ENCODE measurements at regions of chr1 and their contacts with region 1.

Region 1: GRCh38 chr1:67760030-67760821 is 73.0 kb downstream of the GNG12 start:
- DNase-seq: peak; percentile 68
- ATAC-seq: peak; percentile 87
- H3K4me3 ChIP-seq: no peak overlapping the region
- H3K27ac ChIP-seq: peak overlapping the region; percentile 86
- H3K4me1 ChIP-seq: peaks cover 24% of the 10 kb centered on the region
- H3K27me3 ChIP-seq: no peaks in the 10 kb centered on the region
- CTCF ChIP-seq: peak; percentile 89

Region 2: DNA sequence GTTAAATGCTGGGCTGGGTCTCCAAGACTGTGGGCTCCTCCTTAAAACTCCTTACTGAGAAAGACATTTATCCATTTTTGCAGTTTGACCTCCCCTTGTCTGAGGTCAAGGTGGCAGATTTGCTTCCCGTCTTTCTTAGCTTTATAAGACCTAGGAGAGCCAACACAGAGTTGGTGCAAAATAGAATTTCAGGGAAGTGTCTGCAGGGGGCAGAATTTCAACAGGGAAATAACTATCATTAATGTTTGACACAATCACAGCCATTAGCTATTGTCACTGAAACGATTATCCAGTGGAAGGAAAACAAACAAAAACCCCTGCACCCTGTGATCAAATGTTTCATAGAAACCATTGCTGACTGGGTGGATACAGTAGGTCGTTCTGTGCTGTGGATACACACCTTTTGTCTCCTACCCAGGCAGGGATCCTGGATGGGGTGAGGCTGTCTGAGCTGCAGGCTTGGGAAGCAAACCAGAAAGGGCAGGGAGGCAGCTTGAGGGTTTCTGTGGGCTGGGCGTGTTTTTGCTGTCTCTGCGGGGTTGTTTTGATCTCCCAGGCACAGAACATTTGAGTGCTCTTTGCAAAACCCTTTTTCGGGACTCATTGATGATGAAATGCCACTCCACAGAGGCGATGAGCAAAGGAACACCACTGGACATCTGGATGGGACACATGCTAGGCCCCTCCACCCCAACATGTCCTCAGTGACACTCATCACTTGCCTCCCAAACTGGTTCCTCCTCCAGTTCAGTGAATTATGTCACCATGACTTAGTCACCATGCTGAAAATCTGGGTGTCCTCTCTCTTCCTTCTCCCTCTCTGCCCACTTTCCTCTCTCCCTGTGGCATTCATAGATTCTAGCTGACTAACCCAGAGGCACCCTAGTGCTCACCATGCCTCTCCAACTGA is 235.8 kb before region 1 on chr1:
- CTCF ChIA-PET with region 1: interaction called, 11 read pairs
- POLR2A ChIA-PET with region 1: interaction called, 4 read pairs
- in situ Hi-C with region 1: no loop called
- intact Hi-C with region 1: no loop called
- DNase-seq: no peak
- ATAC-seq: no peak
- H3K4me3 ChIP-seq: no peak overlapping the region
- H3K27ac ChIP-seq: no peak overlapping the region
- H3K4me1 ChIP-seq: no peaks in the 10 kb centered on the region
- H3K27me3 ChIP-seq: no peaks in the 10 kb centered on the region
- CTCF ChIP-seq: peak; percentile 50

Region 3: GRCh38 chr1:67535474-67535873 is 224.8 kb before region 1 on chr1:
- CTCF ChIA-PET with region 1: interaction called, 25 read pairs
- POLR2A ChIA-PET with region 1: no interaction called
- in situ Hi-C with region 1: no loop called
- intact Hi-C with region 1: loop called (anchors 1 kb)
- DNase-seq: peak; percentile 70
- ATAC-seq: peak; percentile 87
- H3K4me3 ChIP-seq: no peak overlapping the region
- H3K27ac ChIP-seq: peak overlapping the region; percentile 79
- H3K4me1 ChIP-seq: peaks cover 18% of the 10 kb centered on the region
- H3K27me3 ChIP-seq: no peaks in the 10 kb centered on the region
- CTCF ChIP-seq: peak; percentile 98

Region 4: DNA sequence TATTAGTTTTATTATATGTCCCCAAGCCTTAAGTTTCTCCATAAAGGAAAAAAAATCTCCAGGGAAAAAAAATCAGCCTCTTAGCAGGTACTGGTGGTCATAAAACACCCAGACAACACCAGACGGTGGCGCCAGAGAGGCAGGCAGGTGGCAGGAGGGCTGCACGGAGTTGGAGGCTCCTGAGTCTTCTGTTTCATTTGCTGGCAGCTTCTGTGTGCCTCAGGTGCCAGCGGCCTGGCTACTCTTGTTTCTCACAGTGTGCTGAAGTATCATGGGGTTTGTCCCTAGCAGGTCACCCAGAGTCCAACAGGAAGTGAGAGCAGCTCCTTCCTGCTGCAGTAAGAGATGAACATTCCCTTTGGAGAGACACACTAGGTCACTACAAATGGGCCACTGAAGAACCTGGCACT is 198.5 kb before region 1 on chr1:
- CTCF ChIA-PET with region 1: interaction called, 5 read pairs
- POLR2A ChIA-PET with region 1: no interaction called
- in situ Hi-C with region 1: no loop called
- intact Hi-C with region 1: loop called (anchors 1 kb)
- DNase-seq: peak; percentile 71
- ATAC-seq: peak; percentile 89
- H3K4me3 ChIP-seq: 0 out of 4 replicates have a peak overlapping the region, but pooled peaks of 1 of the 2 experiments have one; percentile 15
- H3K27ac ChIP-seq: peak overlapping the region; percentile 95
- H3K4me1 ChIP-seq: peaks cover 38% of the 10 kb centered on the region
- H3K27me3 ChIP-seq: no peaks in the 10 kb centered on the region
- CTCF ChIP-seq: peak; percentile 96